Thyroid gland (tissue), 4 donors: ENCODE measurements at regions of chr18 and their contacts with region 1.

Region 1: DNA sequence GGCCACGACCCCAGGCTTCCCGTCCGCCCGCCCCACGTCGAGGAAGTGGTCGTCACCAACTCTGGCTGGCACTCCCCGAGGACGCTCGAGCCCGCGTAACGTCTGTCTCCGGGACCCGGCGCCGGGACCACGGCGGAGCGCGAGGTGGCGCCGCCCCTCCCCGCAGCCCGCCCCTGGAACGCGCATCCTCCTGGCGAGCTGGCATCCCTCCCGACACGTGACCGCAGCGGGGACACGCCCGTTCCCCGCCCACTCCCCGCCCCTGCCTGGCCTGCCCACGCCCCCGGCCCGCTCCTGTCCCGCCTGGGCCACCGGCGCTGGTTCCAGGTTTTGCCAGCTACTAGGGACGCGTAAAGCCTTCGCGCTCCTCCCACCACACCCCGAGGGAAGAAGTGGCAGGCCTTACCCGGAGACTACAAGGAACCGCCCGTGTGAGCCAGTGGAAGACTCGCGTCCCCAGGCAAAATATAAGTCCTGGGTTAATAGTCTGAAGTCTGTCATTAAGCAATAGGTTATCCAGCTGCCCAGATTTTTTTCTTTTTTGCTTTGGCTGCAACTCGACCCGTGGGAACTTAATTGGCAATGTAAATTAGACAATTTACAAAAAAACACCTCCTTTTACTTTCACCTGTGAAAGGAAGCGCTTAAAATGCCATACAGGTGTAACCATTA is at the start of gene OSBPL1A:
- DNase-seq: peak; percentile 96 to 98
- H3K4me3 ChIP-seq: peak within 1 kb of the TSS; percentile 26 to 82 (median 59)
- H3K27ac ChIP-seq: peak within 1 kb of the TSS; percentile 54 to 97 (median 83)
- H3K4me1 ChIP-seq: peaks cover 5 to 12% of the 10 kb centered on the region in 2 donors
- H3K27me3 ChIP-seq: no peaks in the 10 kb centered on the region
- CTCF ChIP-seq: no peak
- POLR2A ChIP-seq: peak; percentile 35 to 76
- total RNA-seq, gene OSBPL1A: 47.0 to 57.4 (median 48.2) TPM

Region 2: GRCh38 chr18:23740105-23740830 is 657.6 kb before region 1 on chr18:
- intact Hi-C with region 1: no loop called
- DNase-seq: no peak
- H3K4me3 ChIP-seq: no peak overlapping the region
- H3K27ac ChIP-seq: no peak overlapping the region
- H3K4me1 ChIP-seq: no peaks in the 10 kb centered on the region
- H3K27me3 ChIP-seq: no peaks in the 10 kb centered on the region
- CTCF ChIP-seq: no peak
- POLR2A ChIP-seq: no peak

Region 3: DNA sequence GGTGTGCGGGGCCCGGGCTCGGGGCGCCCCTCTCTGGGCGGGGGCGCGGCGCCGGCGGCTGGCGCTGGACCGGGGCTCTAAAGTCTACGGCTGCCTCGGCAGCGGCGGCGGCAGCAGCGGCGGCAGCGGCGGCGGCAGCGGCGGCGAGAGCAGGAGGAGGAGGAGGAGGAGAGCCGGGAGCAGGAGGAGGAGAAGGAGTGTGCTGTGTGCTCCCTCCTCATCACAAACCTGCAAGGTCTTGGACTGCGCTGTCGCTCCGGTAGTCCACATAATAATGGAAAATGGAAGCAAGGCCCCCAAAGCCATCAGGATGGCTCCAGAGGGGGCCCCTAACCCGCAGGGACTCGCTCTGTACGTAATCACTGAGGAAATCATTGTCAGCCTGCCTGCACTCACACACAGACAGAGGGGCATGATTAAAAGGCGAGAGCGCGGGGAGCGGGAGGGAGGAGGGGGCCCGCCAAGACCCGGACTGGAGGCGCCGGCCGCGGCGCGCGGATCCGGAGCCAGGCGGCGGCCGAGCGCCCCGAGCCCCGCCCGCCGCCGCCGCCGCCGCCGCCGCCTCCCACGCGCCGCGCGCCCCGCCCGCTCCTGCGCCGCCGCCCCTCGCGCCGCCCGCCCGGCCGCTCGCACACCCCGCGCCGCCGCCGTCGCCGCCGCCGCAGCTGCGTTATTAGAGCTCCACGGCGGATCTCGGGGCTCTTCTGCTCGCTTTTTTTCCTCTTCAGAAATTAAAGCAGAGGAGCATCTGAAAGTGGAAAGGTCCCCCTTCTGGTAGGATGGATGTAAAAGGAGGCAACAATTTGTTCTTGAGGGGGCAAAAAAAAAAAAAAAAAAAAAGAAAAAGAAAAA is 954.2 kb after region 1 on chr18 and contains the start of gene ZNF521:
- intact Hi-C with region 1: loop called (anchors 10 kb)
- DNase-seq: peak; percentile 87 to 88
- H3K4me3 ChIP-seq: peak within 1 kb of the TSS; percentile 41 to 75 (median 72)
- H3K27ac ChIP-seq: peak within 1 kb of the TSS; percentile 79 to 92 (median 91)
- H3K4me1 ChIP-seq: peaks cover 6 to 7% of the 10 kb centered on the region in 2 donors
- H3K27me3 ChIP-seq: no peaks in the 10 kb centered on the region
- CTCF ChIP-seq: peak in 3 of 6 experiments; percentile 8 to 19 (median 16)
- POLR2A ChIP-seq: peak; percentile 26 to 85
- total RNA-seq, gene ZNF521: 28.2 to 67.3 (median 53.1) TPM